Endothelial cell of umbilical vein (primary cell): ENCODE measurements at regions of chr14 and their contacts with region 1.

Region 1: DNA sequence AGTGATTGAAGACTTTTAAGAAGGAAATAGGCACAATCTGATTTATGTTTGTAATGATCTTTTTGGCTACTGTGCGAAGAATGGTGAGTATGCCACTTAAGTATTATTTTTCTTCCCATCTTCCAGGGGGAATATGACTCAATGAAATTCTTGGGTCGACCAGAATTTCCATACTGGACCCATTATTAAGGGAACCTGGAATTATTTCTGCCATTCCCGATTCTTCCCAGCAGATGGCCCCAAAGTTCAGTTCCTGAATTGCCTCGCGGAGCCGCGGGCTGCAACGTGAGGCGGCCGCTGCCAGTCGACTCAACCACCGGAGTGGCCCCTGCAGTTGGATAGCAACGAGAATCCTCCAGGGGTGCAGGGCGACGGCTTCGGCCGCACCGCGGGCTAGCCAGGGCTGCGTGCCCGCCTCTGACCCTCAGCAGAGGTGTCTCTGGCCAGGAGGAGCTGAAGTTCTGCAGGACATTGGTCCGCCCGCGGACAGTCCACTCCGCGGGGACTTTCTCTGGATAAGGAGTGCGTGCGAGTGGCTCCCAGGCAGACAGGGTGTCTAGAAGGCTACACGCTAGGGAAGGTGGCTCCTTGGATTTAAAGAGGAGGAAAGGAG is 628 bp upstream of the TSHR start:
- DNase-seq: peak; percentile 80
- H3K4me3 ChIP-seq: peak overlapping the region; percentile 5 to 51 (median 14)
- H3K27ac ChIP-seq: no peak overlapping the region
- H3K4me1 ChIP-seq: peaks cover 4% of the 10 kb centered on the region
- H3K27me3 ChIP-seq: peaks cover 25 to 58% of the 10 kb centered on the region in 2 experiments
- CTCF ChIP-seq: peak; percentile 70
- POLR2A ChIP-seq: no peak

Region 2: DNA sequence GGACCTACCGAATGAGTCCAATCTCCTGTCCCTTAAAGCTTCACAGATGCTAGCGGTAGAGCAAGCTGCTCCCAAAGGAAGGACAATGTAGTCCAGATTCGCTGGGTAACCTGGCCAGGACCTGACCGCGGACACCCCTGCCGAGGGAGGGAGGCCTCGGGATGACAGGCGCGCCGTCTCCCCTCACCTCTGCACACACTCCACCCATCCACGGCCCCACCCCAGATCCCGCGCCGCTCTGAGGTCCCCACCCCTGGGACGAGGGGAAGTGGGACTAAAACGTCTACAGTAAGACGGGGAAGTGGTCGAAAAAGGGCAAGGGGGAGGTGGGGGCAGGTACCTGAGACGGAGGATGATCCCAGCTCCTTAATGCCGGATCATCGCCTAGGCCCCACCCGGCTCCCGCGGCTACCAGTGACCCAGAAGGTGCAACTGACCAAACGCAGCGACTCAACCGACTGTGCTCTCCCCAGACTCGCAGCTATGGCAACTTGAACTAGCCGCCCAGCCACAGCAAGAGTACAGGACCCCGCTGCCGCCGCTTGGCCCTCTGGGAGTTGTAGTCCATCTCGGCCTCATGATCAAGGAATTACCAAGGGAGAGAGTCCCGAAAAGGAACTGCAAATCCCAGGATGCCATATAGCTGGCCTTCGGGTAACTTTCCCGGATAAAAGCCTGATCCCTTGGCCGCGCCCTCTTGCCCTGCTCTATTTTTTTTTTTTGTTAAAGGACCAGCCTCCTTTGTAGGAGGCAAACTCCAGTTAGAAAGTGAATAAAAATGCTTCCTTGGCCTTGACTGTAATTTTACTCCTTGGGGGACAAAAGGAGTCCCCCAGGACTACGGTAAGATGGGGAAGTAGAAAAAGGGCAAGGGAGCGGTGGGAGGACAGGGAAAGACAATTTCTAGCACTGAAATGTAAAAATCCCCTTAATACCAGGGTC is 13.3 kb before region 1 on chr14 and contains the start of gene CEP128:
- CTCF ChIA-PET with region 1: interaction called, 7 read pairs
- POLR2A ChIA-PET with region 1: no interaction called
- dilution Hi-C with region 1: no loop called
- intact Hi-C with region 1: loop called (anchors 1 kb)
- DNase-seq: peak; percentile 98
- H3K4me3 ChIP-seq: peak within 1 kb of the TSS; percentile 25 to 75 (median 74)
- H3K27ac ChIP-seq: peak within 1 kb of the TSS; percentile 26
- H3K4me1 ChIP-seq: peaks cover 7% of the 10 kb centered on the region
- H3K27me3 ChIP-seq: no peaks in the 10 kb centered on the region
- CTCF ChIP-seq: no peak
- POLR2A ChIP-seq: no peak
- total RNA-seq, gene CEP128: 22.9 and 23.7 TPM in 2 replicates

Region 3: DNA sequence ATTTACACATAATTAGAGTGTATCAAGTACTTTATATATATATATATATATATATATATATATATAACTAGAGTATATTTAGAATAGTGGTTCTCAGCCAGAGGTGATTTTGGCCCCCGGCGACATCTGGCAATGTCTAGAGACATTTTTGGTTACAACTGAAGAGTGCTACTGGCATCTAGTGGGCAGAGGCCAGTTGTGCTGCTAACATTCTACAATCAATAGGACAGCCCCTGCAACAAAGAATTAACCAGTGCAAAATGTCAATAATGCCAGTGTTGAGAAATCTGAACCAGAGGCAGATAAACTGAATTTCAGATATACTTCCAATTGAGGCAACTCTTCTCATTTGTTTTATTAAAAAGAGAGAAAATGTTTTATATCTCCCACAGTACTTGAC is 257.1 kb after region 1 on chr14:
- CTCF ChIA-PET with region 1: interaction called, 4 read pairs
- POLR2A ChIA-PET with region 1: no interaction called
- dilution Hi-C with region 1: no loop called
- intact Hi-C with region 1: loop called (anchors 1 kb)
- DNase-seq: peak; percentile 24
- H3K4me3 ChIP-seq: no peak overlapping the region
- H3K27ac ChIP-seq: no peak overlapping the region
- H3K4me1 ChIP-seq: no peaks in the 10 kb centered on the region
- H3K27me3 ChIP-seq: no peaks in the 10 kb centered on the region
- CTCF ChIP-seq: peak; percentile 17 to 26
- POLR2A ChIP-seq: no peak

Region 4: GRCh38 chr14:81453166-81453766 is 498.5 kb after region 1 on chr14:
- CTCF ChIA-PET with region 1: interaction called, 4 read pairs
- POLR2A ChIA-PET with region 1: no interaction called
- dilution Hi-C with region 1: no loop called
- intact Hi-C with region 1: loop called (anchors 1 kb)
- DNase-seq: peak; percentile 48
- H3K4me3 ChIP-seq: no peak overlapping the region
- H3K27ac ChIP-seq: no peak overlapping the region
- H3K4me1 ChIP-seq: no peaks in the 10 kb centered on the region
- H3K27me3 ChIP-seq: peaks cover 2 to 9% of the 10 kb centered on the region in 2 experiments
- CTCF ChIP-seq: peak; percentile 69 to 73
- POLR2A ChIP-seq: no peak

Region 5: GRCh38 chr14:81464247-81465002 is 509.6 kb after region 1 on chr14:
- CTCF ChIA-PET with region 1: interaction called, 3 read pairs
- POLR2A ChIA-PET with region 1: no interaction called
- dilution Hi-C with region 1: no loop called
- intact Hi-C with region 1: loop called (anchors 1 kb)
- DNase-seq: peak; percentile 79
- H3K4me3 ChIP-seq: peak overlapping the region; percentile 38 to 86 (median 41)
- H3K27ac ChIP-seq: no peak overlapping the region
- H3K4me1 ChIP-seq: no peaks in the 10 kb centered on the region
- H3K27me3 ChIP-seq: no peaks in the 10 kb centered on the region
- CTCF ChIP-seq: peak; percentile 68 to 82
- POLR2A ChIP-seq: no peak